Activated CD8-positive, alpha-beta T cell treated with anti-CD3 and anti-CD28 coated beads for 36 hours (primary cell): ENCODE measurements at regions of chr17 and their contacts with region 1.

Region 1: DNA sequence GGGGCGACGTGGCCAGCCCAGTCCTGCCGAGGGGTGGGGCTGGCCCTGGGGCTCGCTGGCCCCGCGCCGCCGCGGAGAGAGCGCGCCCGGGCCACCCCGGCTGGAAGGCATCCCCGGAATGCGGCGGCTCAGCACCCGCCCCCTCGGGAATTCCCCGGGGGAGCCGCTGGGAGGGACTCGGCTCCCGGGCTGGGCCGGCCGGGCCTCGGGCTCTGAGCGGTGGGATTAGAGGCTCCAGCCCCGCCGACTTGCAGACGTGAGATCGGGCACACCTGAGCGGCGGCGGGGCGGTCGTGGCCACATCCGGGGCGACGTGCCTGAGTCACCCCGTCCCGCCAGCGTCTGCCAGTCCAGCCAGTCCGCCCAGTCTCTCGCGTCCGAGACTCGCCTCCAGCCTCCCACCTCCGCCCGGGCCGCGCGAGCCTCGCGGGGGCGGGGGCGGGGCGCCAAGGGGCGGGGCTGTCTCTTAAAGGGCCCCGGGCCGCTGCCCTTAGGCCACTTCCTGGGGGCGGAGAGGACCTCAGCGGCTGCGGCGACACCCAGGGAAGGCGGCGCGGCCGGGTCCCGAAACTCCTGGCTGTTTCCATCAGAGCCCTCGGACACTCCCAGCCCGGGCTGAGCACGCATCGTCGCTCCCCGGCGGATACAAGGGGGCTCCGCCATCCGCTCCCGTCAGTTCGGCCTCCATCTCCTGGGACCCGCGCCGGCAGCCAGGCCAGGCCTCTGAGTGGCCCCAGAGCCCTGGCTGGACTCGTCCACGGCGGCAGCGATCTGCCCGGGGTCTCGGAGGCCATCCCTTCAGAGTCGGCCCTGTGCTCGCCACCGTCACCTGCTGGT is at the start of gene KCTD11:
- DNase-seq: peak; percentile 90
- ATAC-seq: peak; percentile 46
- H3K4me3 Mint-ChIP-seq: peak within 1 kb of the TSS; percentile 87
- H3K27ac Mint-ChIP-seq: peak within 1 kb of the TSS; percentile 87
- H3K4me1 Mint-ChIP-seq: peaks cover 57% of the 10 kb centered on the region
- H3K27me3 Mint-ChIP-seq: no peaks in the 10 kb centered on the region
- CTCF ChIP-seq: no peak
- total RNA-seq, gene KCTD11: 11.0 to 11.2 TPM

Region 2: DNA sequence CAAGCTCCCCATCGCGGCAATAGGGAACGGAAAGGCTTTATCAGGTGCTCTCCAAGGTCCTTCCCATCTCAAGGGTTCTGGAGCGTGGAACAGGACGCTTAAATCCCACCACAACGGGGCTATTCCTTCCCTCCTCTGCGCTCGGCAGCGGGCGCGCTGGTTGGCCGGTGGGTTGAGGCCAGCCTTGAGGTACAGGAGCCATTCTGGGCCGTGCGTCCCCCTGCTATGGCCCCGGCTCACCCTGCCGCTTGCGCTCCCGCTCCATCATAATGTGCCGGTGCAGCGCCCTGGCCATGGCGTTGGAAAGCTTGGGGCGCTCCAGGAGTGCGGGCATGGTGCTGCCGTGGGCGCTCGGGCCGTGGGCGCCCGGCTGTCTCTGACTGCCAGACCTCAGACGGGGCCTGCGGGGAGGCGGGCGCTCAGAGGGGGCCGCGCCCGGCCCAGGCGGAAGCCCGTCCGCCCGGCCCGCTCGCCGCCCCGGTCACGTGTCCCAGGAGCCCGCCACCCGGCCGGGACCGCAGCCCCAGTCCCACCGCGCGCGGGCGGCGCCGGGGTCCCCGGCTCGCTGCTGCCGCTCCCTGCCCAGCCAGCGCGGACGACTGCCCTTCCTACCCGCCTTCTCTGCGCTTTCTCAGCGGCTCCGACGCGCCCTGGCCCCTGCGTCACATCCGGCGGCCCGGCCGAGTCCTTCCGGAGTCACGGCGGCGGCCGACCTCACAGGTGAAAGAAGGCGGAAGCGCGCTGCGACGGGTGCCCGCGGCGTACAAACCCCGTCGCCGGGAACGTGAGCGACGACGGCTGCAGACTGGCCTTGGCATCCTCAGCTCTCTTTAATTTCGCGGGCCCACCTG is 36.9 kb before region 1 on chr17 and contains the start of gene GPS2:
- CTCF ChIA-PET with region 1: interaction called, 4 read pairs
- POLR2A ChIA-PET with region 1: interaction called, 29 read pairs
- intact Hi-C with region 1: no loop called
- DNase-seq: peak; percentile 96
- ATAC-seq: peak; percentile 82
- H3K4me3 Mint-ChIP-seq: peak within 1 kb of the TSS; percentile 88
- H3K27ac Mint-ChIP-seq: peak within 1 kb of the TSS; percentile 89
- H3K4me1 Mint-ChIP-seq: peaks cover 45% of the 10 kb centered on the region
- H3K27me3 Mint-ChIP-seq: no peaks in the 10 kb centered on the region
- CTCF ChIP-seq: no peak
- total RNA-seq, gene GPS2: 31.8 to 36.8 TPM

Region 3: GRCh38 chr17:7329374-7329996 is 22.4 kb before region 1 on chr17:
- CTCF ChIA-PET with region 1: interaction called, 50 read pairs
- POLR2A ChIA-PET with region 1: interaction called, 76 read pairs
- intact Hi-C with region 1: no loop called
- DNase-seq: peak; percentile 99
- ATAC-seq: peak; percentile 70
- H3K4me3 Mint-ChIP-seq: peak overlapping the region; percentile 80
- H3K27ac Mint-ChIP-seq: peak overlapping the region; percentile 96
- H3K4me1 Mint-ChIP-seq: peaks cover 43% of the 10 kb centered on the region
- H3K27me3 Mint-ChIP-seq: no peaks in the 10 kb centered on the region
- CTCF ChIP-seq: no peak

Region 4: DNA sequence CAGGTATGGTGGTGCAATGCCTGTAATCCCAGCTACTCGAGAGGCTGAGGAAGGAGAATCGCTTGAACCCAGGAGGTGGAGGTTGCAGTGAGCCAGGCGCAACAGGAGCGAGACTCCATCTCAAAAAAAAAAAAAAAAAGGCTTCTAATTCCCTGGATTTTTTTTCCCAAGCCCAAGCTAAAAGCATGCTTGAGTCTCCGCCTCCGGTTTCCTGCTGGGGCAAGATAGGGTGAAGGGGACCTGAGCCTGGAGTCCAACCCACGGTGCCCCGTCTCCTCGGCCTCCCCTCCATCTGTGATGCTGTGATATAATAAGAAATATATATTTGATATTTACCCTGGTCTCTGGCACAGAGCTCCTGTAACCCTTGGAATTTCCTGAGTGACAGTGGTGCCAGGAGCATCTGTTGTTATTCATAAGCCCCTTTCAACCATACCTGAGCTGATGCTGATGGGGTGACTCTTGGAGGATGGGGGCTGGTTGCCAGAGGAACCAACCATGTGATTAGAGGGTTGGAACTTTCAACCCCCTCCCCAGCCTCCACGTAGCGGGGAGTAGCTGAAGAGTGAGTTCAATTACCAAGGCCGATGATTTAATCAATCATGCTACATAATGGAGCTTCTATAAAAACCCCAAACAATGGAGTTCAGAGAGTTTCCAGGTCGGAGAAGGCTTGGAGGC is 16.2 kb after region 1 on chr17:
- CTCF ChIA-PET with region 1: interaction called, 19 read pairs
- POLR2A ChIA-PET with region 1: no interaction called
- intact Hi-C with region 1: no loop called
- DNase-seq: no peak
- ATAC-seq: no peak
- H3K4me3 Mint-ChIP-seq: no peak overlapping the region
- H3K27ac Mint-ChIP-seq: no peak overlapping the region
- H3K4me1 Mint-ChIP-seq: no peaks in the 10 kb centered on the region
- H3K27me3 Mint-ChIP-seq: no peaks in the 10 kb centered on the region
- CTCF ChIP-seq: no peak

Region 5: DNA sequence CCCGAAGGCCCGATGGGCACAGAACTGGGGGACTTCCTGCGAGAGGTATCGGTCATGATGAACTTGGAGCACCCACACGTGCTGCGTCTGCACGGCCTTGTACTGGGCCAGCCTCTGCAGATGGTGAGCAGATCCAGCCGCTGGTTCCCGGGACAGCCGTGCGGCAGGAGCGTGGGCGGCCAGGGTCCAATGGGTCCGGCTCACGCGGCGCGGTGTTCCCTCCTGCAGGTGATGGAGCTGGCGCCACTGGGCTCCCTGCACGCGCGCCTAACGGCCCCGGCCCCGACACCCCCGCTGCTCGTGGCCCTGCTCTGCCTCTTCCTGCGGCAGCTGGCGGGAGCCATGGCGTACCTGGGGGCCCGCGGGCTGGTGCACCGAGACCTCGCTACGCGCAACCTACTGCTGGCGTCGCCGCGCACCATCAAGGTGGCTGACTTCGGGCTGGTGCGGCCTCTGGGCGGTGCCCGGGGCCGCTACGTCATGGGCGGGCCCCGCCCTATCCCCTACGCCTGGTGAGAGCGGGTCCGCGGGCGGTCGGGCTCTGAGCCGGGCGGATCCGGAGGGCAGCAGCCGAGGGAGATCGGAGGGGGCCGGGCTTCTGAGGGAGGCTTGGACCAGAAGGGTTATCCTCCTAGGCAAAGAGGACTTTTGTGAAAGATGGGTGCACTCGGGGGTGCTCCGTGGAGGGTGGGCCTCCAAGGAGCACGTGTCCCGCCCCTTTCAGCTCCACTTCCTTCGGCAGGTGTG is 32.0 kb after region 1 on chr17:
- CTCF ChIA-PET with region 1: interaction called, 10 read pairs
- POLR2A ChIA-PET with region 1: interaction called, 3 read pairs
- intact Hi-C with region 1: no loop called
- DNase-seq: peak; percentile 82
- ATAC-seq: peak; percentile 96
- H3K4me3 Mint-ChIP-seq: peak overlapping the region; percentile 76
- H3K27ac Mint-ChIP-seq: peak overlapping the region; percentile 85
- H3K4me1 Mint-ChIP-seq: peaks cover 7% of the 10 kb centered on the region
- H3K27me3 Mint-ChIP-seq: peaks cover 32% of the 10 kb centered on the region
- CTCF ChIP-seq: no peak

Region 6: DNA sequence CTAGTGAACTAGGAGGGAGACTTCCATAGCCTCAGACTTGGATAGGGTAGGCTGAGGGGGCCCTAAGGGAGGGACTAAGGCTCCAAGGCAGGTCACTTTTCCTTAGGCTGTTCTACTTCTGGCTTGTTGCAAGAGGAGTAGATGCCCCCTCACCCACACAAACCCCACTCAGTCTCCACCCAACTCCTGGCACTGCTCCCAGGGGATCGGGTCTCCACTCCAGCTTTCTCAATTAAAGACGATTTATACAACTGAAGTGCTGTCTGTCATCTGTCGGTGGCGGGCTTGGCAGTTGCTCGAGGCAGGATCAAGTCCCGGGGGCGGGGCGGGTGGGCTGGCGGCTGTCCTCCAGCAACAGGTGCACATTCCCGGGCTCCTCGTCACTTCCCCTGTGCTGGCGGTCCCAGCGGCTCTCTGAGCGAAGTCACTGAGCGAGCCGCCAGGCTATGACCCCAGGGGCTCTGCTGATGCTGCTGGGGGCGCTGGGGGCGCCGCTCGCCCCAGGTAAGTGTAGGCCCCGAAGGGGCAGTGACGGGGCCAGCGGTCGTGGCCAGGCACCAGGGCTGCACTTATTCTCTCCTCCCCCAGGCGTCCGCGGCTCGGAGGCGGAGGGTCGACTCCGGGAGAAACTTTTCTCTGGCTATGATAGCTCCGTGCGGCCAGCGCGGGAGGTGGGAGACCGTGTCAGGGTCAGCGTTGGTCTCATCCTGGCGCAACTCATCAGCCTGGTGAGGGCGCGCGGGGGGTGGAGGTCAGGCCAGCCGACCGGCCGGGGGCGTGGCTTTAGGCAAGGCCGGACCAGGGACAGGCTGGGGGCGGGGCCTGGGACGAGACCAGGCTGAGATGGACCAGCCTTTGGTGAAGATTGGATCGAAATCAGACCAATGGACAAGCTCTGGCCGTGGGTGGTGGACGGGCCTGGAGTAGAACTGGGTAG is 93.1 kb after region 1 on chr17 and contains the start of gene CHRNB1:
- CTCF ChIA-PET with region 1: interaction called, 12 read pairs
- POLR2A ChIA-PET with region 1: interaction called, 3 read pairs
- intact Hi-C with region 1: no loop called
- DNase-seq: peak; percentile 44
- ATAC-seq: peak; percentile 5
- H3K4me3 Mint-ChIP-seq: peak within 1 kb of the TSS; percentile 64
- H3K27ac Mint-ChIP-seq: no peak within 1 kb of the TSS
- H3K4me1 Mint-ChIP-seq: peaks cover 25% of the 10 kb centered on the region
- H3K27me3 Mint-ChIP-seq: peaks cover 57% of the 10 kb centered on the region
- CTCF ChIP-seq: no peak
- total RNA-seq, gene CHRNB1: 11.5 to 11.7 TPM

Region 7: DNA sequence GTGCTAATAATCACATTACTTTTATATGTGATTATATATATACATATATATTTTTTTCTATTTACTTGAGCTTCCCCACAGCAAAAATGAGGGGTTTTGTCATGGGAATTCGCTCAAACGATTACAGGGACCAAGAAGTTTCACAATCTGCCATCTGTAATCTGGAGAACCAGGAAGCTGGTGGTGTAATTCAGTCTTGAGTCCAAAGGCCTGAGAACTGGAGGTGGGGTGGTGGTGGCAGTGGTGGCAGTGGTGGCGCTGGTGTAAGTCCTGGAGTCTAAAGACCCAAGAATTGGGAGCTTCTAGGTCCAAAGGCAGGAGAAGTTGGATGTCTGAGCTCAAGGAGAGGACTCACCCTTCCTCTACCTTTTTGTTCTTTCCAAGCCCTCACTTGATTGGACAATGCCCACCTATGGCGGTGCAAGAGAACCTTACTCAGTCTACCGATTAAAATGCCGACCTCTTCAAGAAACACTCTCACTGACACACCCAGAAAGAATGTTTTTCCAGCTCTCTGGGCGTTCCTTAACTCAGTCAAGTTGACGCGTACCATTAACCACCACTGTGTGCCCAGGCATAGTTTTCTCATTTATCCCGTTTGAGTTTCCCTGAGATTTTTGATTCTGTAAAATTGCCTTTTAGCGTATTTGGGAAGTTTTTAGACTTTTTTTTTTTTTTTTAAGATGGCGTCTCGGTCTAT is 164.2 kb after region 1 on chr17:
- CTCF ChIA-PET with region 1: interaction called, 15 read pairs
- POLR2A ChIA-PET with region 1: no interaction called
- intact Hi-C with region 1: no loop called
- DNase-seq: no peak
- ATAC-seq: no peak
- H3K4me3 Mint-ChIP-seq: no peak overlapping the region
- H3K27ac Mint-ChIP-seq: no peak overlapping the region
- H3K4me1 Mint-ChIP-seq: no peaks in the 10 kb centered on the region
- H3K27me3 Mint-ChIP-seq: no peaks in the 10 kb centered on the region
- CTCF ChIP-seq: no peak